ENCODE measurements at regions of chr5 and their contacts with region 1.

Region 1: DNA sequence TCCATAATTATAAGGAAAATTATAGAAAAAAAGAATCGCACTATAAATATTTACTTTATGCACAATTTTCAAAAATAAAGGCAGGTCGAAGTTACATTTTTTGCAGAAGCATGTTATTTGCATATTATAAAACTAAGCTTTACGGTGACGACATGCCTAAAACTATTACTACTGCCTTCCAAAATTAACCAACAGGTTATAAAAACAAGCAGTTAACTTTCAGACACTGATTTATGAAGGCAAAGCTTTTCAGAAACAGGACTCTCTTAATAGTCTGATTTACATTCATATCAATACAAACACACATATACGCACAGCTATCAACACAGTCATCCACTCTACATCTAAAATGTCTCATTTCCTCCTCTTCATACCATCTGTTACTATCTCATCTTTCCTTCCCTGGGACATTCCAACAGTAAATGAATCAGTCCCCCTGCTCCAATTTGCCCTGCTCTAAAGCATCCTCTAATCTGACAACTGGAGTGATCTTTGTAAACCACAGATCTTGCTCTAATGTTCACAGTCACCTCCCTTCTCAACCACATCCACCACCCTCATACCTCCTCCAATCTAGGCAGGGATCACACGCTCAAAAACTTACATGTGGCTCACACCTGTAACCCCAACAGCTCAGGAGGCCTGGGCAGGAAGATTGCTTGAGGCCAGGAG is 21.6 kb downstream of the FBXW11 start:
- DNase-seq: peak; percentile 58 to 76
- ATAC-seq: peak; percentile 86 to 98 (median 88)
- H3K4me3 ChIP-seq: no peak overlapping the region
- H3K4me3 Mint-ChIP-seq: peak overlapping the region; percentile 5
- H3K27ac ChIP-seq: peak overlapping the region; percentile 10
- H3K27ac Mint-ChIP-seq: peak overlapping the region; percentile 1 to 20
- H3K4me1 ChIP-seq: peaks cover 35% of the 10 kb centered on the region
- H3K4me1 Mint-ChIP-seq: peaks cover 42 to 46% of the 10 kb centered on the region in 2 donors
- H3K27me3 ChIP-seq: no peaks in the 10 kb centered on the region
- H3K27me3 Mint-ChIP-seq: no peaks in the 10 kb centered on the region
- CTCF ChIP-seq: no peak

Region 2: GRCh38 chr5:172006321-172007174 is 21.7 kb after region 1 on chr5 and contains the start of gene FBXW11:
- intact Hi-C with region 1: loop called (anchors 2 kb)
- DNase-seq: peak; percentile 90 to 98
- ATAC-seq: peak; percentile 88 to 95 (median 89)
- H3K4me3 ChIP-seq: peak within 1 kb of the TSS; percentile 72
- H3K4me3 Mint-ChIP-seq: peak within 1 kb of the TSS; percentile 100
- H3K27ac ChIP-seq: peak within 1 kb of the TSS; percentile 98
- H3K27ac Mint-ChIP-seq: peak within 1 kb of the TSS; percentile 98 to 100
- H3K4me1 ChIP-seq: peaks cover 26% of the 10 kb centered on the region
- H3K4me1 Mint-ChIP-seq: peaks cover 52 to 53% of the 10 kb centered on the region in 2 donors
- H3K27me3 ChIP-seq: no peaks in the 10 kb centered on the region
- H3K27me3 Mint-ChIP-seq: no peaks in the 10 kb centered on the region
- CTCF ChIP-seq: no peak
- total RNA-seq, gene FBXW11: 26.7 to 40.3 (median 39.5) TPM

Region 3: DNA sequence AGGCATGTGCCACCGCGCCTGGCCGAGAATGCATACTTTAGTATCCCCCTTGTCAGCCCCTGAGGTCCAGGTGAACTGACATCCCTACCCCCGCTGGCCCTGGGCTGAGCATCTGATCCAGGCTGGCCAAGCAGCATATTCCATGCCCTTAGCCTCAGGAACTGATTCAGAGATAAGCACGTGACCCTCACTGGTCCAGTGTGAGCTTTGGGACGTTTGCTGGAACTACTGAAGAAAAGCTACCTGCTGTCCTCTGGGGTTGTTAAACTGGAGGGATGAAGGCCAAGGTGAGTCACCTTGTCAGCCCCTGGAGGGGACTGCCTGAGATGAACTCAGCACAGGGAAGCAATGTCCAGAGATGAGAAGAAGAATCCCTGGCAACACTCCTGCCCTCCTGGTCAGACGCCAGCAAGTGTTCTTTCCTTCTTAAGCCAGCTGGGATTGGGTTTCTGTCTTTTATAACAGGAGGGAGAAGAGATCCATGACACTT is 80.7 kb after region 1 on chr5:
- intact Hi-C with region 1: loop called (anchors 5 kb)
- DNase-seq: no peak
- ATAC-seq: no peak
- H3K4me3 ChIP-seq: no peak overlapping the region
- H3K4me3 Mint-ChIP-seq: peak overlapping the region; percentile 82
- H3K27ac ChIP-seq: peak overlapping the region; percentile 65
- H3K27ac Mint-ChIP-seq: peak overlapping the region; percentile 92 to 94
- H3K4me1 ChIP-seq: peaks cover 36% of the 10 kb centered on the region
- H3K4me1 Mint-ChIP-seq: peaks cover 60 to 62% of the 10 kb centered on the region in 2 donors
- H3K27me3 ChIP-seq: no peaks in the 10 kb centered on the region
- H3K27me3 Mint-ChIP-seq: no peaks in the 10 kb centered on the region
- CTCF ChIP-seq: no peak

Region 4: DNA sequence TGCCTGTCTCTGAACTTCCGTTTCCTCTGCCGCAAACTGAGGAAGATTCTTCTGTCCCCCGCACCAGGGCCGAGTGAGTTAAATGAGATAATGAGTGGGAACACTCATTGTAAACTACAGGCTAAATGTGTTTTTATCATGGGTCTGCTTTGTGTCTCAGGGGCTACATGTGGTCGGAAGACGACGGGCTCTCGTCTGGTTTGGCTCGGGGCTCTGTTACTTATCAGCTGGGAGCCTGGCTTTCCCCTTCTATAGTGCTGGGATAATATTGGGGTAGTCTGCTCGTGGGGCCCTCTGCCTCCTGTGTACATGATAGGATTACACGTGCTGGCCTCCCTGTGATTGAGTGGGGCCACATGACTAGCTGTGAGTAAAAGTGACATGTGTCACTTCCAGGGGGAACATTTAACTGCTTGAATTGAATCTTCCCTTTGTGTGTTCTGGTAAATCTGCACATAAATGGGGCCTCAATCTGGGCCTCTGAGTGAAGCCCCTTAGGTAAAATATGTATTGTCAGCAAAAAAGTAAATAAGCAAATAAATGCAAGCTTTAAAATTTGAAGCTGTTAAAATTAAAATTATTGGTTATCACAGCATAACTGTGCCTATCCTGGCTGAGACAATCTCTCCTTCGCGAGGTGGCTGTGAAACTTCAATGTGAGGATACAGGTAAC is 556.4 kb after region 1 on chr5:
- intact Hi-C with region 1: no loop called
- DNase-seq: no peak
- ATAC-seq: no peak
- H3K4me3 ChIP-seq: no peak overlapping the region
- H3K4me3 Mint-ChIP-seq: no peak overlapping the region
- H3K27ac ChIP-seq: no peak overlapping the region
- H3K27ac Mint-ChIP-seq: no peak overlapping the region
- H3K4me1 ChIP-seq: no peaks in the 10 kb centered on the region
- H3K4me1 Mint-ChIP-seq: no peaks in the 10 kb centered on the region
- H3K27me3 ChIP-seq: no peaks in the 10 kb centered on the region
- H3K27me3 Mint-ChIP-seq: peaks cover 9 to 11% of the 10 kb centered on the region in 2 donors
- CTCF ChIP-seq: no peak

Measured in natural killer cell (primary cell).